Common myeloid progenitor, CD34-positive (primary cell): ENCODE measurements at regions of chr7 and their contacts with region 1.

Region 1: GRCh38 chr7:17009007-17009719 is 127.4 kb upstream of the AGR3 start:
- DNase-seq: peak; percentile 58 to 78 (median 73)
- H3K4me3 ChIP-seq: no peak overlapping the region
- H3K27ac ChIP-seq: no peak overlapping the region
- H3K4me1 ChIP-seq: peaks cover 0 to 10% (median 3%) of the 10 kb centered on the region in 4 experiments
- H3K27me3 ChIP-seq: no peaks in the 10 kb centered on the region

Region 2: GRCh38 chr7:17058568-17058967 is 49.4 kb after region 1 on chr7:
- CTCF ChIA-PET with region 1: interaction called, 10 read pairs
- POLR2A ChIA-PET with region 1: no interaction called
- DNase-seq: peak; percentile 66 to 92 (median 89)
- H3K4me3 ChIP-seq: peak overlapping the region in 2 of 7 experiments; percentile 24 to 25
- H3K27ac ChIP-seq: peak overlapping the region; percentile 36 to 62
- H3K4me1 ChIP-seq: peaks cover 3 to 34% (median 18%) of the 10 kb centered on the region in 4 experiments
- H3K27me3 ChIP-seq: no peaks in the 10 kb centered on the region